ENCODE measurements at regions of chr1 and their contacts with region 1.

Region 1: DNA sequence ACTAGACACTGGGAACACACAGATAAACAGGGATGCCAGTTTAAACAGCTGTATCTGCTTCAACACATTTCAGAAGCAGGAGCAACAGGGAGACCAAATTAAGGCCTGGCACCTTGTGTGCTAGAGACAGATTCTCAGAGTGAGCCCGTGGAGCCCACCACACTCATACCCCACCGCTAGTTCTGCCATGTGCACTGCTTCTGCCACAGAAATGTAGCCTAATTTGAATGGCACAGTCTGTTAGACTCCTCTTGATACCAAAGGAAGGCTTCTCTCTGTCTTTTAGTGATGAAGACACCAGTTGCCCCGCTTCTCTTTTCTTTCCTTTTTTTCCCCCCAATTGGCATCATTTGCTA is 29.3 kb upstream of the ACP6 start:
- DNase-seq: no peak
- ATAC-seq: no peak

Region 2: DNA sequence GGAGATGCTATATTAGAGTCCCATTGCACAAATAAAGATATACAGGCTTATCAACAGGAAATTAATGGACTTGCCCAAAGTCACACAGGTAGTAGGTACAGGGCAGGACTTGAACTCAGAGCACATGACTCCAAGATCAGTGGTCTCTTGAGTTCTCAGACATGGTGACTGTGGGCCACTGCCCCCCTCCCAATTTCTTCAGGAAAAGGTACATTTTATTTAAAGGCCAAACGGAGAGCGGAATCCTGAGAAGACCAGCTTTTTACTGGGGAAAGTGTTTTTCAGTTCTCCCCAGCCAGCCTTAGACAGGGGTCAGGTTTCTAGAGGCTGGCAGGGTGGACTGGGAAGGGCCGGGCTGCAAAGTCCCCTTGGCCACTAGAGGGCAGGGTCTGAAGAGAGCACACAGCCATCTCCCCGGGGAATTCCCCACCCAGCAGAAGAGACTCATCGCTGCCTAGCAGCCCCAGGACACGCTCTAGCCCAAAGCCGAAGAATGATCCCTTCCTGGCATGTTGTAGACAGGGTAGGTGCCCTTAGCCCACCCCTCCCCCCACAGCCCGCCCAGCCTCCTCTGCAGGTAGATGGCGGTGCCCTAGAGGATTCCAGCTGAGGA is 59.0 kb before region 1 on chr1:
- intact Hi-C with region 1: loop called in 1 of 2 experiments (anchors 5 kb)
- DNase-seq: peak; percentile 75
- ATAC-seq: peak; percentile 92 to 96